GM23248 (cell line): ENCODE measurements at regions of chr5 and their contacts with region 1.

Region 1: DNA sequence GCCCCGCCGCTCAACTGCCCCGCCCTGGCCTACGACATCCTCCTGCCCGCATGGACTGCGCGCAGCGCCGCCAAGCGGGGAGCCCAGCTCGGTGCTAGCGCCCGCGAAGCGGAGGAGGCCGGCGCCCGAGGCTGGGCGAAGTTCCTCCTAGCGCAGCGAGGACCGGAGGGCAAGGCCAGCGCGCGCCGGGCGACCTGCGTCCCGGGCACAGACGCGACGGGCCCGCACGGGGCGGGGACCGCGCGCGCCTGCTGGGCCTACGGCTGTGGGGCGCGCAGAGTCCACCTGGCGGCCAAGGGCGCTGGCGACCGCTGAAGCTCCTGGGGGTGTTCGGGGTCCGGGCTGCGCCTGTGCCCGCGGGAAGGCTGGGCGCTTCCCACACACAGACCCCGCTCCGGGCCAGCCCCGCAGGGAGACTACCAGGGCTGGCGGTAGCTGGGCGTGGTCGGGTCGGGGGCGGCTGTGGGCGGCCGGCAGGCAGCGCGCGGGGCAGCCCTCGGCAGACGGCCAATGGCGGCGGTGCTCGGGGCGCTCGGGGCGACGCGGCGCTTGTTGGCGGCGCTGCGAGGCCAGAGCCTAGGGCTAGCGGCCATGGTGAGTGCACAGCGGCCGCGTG is at the start of gene PCBD2:
- DNase-seq: peak; percentile 97
- H3K4me3 ChIP-seq: peak within 1 kb of the TSS; percentile 96
- H3K27ac ChIP-seq: peak within 1 kb of the TSS; percentile 86
- H3K4me1 ChIP-seq: no peaks in the 10 kb centered on the region
- H3K27me3 ChIP-seq: no peaks in the 10 kb centered on the region
- total RNA-seq, gene PCBD2: 4.9 and 10.1 TPM in 2 replicates

Region 2: GRCh38 chr5:135139381-135140137 is 234.8 kb after region 1 on chr5:
- in situ Hi-C with region 1: no loop called
- DNase-seq: peak; percentile 90
- H3K4me3 ChIP-seq: 0 out of 2 replicates have a peak overlapping the region, but pooled peaks have one; percentile 20
- H3K27ac ChIP-seq: peak overlapping the region; percentile 44
- H3K4me1 ChIP-seq: peaks cover 35% of the 10 kb centered on the region
- H3K27me3 ChIP-seq: no peaks in the 10 kb centered on the region

Region 3: GRCh38 chr5:135332519-135333150 is 427.9 kb after region 1 on chr5:
- in situ Hi-C with region 1: loop called (anchors 25 kb)
- DNase-seq: peak; percentile 81
- H3K4me3 ChIP-seq: no peak overlapping the region
- H3K27ac ChIP-seq: no peak overlapping the region
- H3K4me1 ChIP-seq: peaks cover 7% of the 10 kb centered on the region
- H3K27me3 ChIP-seq: no peaks in the 10 kb centered on the region